ENCODE measurements at regions of chr10 and their contacts with region 1.

Region 1: GRCh38 chr10:90912174-90912573 is 8.7 kb downstream of the ANKRD1 start:
- H3K4me3 Mint-ChIP-seq: no peak overlapping the region
- H3K27ac Mint-ChIP-seq: no peak overlapping the region
- H3K4me1 Mint-ChIP-seq: no peaks in the 10 kb centered on the region
- H3K27me3 Mint-ChIP-seq: peaks cover 4% of the 10 kb centered on the region

Region 2: DNA sequence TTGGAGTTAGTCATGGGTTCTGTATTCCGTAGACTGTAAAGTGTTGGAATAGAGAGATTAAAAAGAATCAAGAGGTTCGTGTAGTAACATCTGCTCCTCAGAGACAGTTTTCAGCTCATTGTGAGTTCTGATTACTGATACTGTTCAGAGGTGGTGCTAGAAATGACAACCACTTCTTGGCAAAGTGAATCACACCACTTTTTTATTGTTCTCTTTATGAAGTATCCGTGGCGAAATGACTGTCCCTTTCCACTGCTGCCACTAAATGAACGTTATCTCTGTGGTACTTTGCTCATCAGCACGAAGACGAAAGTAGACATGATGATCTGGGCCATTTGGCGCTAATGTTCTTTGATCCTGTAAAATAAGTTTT is 39.5 kb before region 1 on chr10:
- intact Hi-C with region 1: no loop called
- H3K4me3 Mint-ChIP-seq: peak overlapping the region; percentile 98
- H3K27ac Mint-ChIP-seq: peak overlapping the region; percentile 86
- H3K4me1 Mint-ChIP-seq: peaks cover 27% of the 10 kb centered on the region
- H3K27me3 Mint-ChIP-seq: peaks cover 10% of the 10 kb centered on the region

Region 3: DNA sequence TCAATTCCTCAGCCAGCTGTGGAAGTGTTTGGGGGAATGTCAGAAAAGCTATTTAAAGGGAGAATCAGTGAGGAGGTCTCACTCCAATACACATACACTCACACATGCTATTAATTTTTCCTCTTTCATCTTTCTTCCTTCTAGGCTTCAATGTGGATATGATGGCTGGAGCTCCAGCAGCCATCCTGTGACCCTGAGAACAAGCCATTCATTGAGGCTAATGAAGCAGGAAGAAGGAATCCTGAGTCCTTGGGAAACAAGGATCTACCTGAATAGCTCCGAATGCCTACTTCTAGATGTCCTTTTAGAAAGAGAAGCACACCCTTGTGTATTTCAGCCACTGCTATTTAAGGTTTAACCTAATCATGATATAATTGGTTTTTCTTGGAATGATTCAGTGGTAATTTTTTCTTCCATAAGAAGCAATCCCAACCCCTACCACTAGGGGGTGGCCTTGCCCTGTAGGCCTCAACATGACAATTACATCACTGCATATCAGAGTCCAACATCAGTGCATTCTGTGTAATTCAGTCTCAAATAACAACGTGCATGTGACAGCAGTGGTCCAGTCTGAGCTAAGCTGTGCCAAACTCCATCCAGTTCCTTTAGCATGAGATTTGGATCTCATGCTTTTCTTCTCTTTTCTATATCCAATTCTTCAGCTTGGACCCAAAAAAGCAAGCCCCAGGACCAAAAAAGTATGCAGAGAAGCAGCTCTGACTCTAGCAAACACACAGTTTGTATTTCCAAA is 94.0 kb after region 1 on chr10:
- intact Hi-C with region 1: loop called (anchors 5 kb)
- H3K4me3 Mint-ChIP-seq: no peak overlapping the region
- H3K27ac Mint-ChIP-seq: no peak overlapping the region
- H3K4me1 Mint-ChIP-seq: peaks cover 6% of the 10 kb centered on the region
- H3K27me3 Mint-ChIP-seq: no peaks in the 10 kb centered on the region

Measured in dendritic cell treated with granulocyte-macrophage colony-stimulating factor and Interleukin-4, amounts not matched to agents 40 ng/mL and 50 ng/mL, for 4 days (primary cell).